ENCODE measurements at regions of chr11 and their contacts with region 1.

Region 1: DNA sequence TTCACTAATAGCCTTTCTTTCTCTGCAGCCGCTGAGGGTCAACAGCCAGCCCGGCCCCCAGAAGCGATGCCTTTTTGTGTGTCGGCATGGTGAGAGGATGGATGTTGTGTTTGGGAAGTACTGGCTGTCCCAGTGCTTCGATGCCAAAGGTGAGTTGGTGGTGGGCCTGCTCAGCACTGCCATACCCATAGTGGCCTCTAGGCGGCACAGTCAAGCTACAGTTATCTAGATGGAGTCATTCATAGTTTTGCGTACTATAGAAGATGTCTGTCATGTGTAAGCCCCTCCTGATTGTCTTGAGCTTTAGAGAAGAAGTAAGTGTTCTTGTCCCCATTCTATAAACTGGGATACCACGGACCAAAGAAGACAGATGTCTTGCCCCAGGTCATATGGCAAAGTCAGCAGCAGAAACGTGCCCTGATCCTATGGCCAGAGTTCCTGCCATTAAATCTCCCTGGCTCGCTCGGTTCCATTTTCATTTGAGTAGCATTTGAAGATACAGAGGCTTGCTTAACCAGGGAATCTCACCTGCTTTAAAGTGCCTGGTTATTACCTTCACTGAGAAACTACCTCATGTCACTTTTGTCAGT is 42.1 kb upstream of the CRTAM start:
- DNase-seq: no peak
- H3K4me3 ChIP-seq: no peak overlapping the region
- H3K27ac ChIP-seq: no peak overlapping the region
- H3K27me3 ChIP-seq: no peaks in the 10 kb centered on the region
- CTCF ChIP-seq: peak; percentile 79

Region 2: GRCh38 chr11:122721964-122722266 is 74.3 kb before region 1 on chr11:
- CTCF ChIA-PET with region 1: no interaction called
- POLR2A ChIA-PET with region 1: interaction called, 10 read pairs
- DNase-seq: peak; percentile 64
- H3K4me3 ChIP-seq: no peak overlapping the region
- H3K27ac ChIP-seq: peak overlapping the region; percentile 83
- H3K27me3 ChIP-seq: no peaks in the 10 kb centered on the region
- CTCF ChIP-seq: no peak

Region 3: DNA sequence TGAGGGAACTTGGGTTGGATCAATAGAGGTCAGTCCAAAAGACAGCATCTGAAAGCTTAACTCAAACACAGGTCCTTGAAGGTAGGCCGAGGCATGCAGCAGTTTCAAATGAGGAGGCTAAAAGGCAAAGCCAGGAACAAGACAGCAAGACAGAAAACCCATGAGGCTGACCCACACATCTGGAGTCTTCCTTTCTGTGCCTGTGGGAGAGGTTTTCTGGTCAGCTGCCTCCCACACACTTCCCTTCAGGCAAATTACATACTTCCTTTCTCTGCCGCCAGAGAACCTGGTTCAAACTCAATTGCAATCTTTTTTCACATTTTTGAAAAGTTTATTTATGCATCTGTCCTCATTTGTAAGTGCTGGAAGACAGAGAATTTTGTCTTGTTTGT is 12.3 kb after region 1 on chr11:
- CTCF ChIA-PET with region 1: interaction called, 10 read pairs
- POLR2A ChIA-PET with region 1: no interaction called
- DNase-seq: no peak
- H3K4me3 ChIP-seq: no peak overlapping the region
- H3K27ac ChIP-seq: peak overlapping the region; percentile 76
- H3K27me3 ChIP-seq: no peaks in the 10 kb centered on the region
- CTCF ChIP-seq: no peak

Region 4: DNA sequence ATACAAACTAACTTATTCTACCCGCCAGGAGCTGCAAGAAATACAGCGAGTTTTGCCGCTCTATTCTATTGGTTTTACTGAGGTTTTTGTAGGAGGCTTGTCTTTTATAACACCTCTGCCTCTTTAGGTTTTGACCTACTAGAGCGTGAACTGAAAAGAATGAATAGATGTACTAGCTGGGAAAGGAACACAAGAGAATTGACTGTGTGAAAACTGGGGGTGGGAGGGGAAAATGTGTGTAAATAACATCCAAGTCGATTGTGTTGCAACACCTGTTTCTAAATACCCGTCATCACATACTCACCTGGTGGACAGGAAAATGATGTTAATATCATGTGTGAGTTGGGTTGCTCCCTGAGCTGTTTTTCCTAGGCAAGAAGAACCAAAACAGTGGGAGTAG is 73.4 kb after region 1 on chr11:
- CTCF ChIA-PET with region 1: no interaction called
- POLR2A ChIA-PET with region 1: no interaction called
- DNase-seq: no peak
- H3K4me3 ChIP-seq: no peak overlapping the region
- H3K27ac ChIP-seq: no peak overlapping the region
- H3K27me3 ChIP-seq: peaks cover 19% of the 10 kb centered on the region
- CTCF ChIP-seq: no peak